ENCODE measurements at regions of chr14 and their contacts with region 1.

Region 1: DNA sequence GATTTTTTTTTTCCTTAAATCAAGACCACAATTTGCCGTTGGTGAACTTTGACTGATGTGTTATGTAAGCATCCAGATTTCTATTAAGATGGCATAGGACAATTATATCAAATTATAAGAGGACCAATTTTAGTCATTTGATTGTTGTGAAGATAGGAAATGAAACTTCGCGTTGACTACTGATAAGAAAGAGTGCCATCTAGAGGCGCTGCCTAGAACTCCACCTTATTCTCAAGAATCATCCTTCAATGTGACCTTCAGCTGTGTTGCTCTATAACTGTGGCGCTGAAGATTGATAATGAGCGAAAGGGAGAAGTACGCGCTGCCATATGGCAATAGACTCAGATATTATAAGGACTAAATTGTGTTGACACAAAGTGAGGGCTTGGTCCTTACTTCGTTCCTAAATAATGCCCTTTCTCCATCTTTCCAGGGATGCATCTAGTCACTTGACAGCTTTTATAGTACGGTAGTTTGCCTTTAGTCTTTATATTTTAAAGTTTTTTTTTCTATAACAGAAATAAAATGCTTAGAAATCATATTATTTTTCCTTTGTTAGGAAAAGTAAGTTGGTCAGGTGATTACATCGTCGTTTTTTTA is 350.8 kb upstream of the STXBP6 start:
- DNase-seq: no peak
- CTCF ChIP-seq: peak; percentile 57

Region 2: DNA sequence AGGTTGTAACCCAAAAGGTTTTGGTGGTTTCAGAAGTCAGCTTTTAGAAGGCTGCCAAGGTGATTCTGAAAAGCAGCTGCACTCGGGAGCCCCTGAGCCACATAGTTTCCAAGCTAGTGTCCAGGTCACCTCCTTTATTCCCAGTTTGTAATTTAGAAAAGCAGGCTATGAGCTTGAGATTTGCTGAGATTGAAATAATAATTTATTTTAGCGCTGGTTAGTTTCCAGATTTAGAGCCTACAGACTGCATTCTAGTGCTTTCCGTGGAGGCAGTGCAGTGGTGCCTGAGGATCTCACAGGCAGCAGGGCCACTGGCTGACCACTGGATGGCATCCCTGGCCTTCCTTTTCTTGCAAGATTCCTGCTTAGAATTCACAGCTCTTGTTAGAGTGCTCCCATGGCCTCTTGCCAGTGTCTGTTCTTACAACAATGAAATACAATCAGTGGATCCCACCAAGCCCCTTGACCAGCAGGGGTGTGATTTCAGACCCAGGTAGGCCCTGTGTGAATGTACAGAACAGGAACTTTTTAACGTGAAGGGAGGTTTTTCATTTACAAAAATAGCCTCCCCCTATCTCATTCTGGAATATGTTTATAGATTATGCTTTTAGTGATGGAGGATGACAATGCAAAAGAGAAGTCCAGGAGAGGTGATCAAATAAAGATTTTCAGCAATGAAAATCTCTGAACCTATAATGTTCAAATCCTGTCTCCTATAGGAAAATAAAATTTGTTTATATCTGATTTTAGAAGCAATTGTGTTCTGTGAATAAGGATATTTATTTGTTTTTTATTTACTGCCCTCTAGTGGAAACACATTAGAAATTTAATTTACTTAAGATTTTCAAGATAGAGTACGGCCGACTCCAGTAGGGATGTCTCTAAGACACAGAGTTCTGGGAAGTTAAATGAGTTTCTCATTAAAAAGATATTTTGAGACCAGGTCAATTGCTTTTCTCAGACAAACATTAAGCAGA is 11.4 kb after region 1 on chr14:
- CTCF ChIA-PET with region 1: interaction called, 33 read pairs
- POLR2A ChIA-PET with region 1: no interaction called
- DNase-seq: no peak
- CTCF ChIP-seq: peak; percentile 4

Measured in GM10248 (cell line).